ENCODE measurements at regions of chr17 and their contacts with region 1.

Region 1: GRCh38 chr17:43316522-43317142 is 82.2 kb upstream of the ARL4D start:
- DNase-seq: no peak
- ATAC-seq: no peak
- H3K4me3 ChIP-seq: no peak overlapping the region
- H3K27ac ChIP-seq: no peak overlapping the region
- H3K4me1 ChIP-seq: no peaks in the 10 kb centered on the region
- H3K27me3 ChIP-seq: no peaks in the 10 kb centered on the region
- CTCF ChIP-seq: no peak
- POLR2A ChIP-seq: no peak
- RAD21 ChIP-seq: no peak

Region 2: GRCh38 chr17:42997984-42998938 is 318.4 kb before region 1 on chr17 and contains the start of gene RPL27:
- CTCF ChIA-PET with region 1: interaction called, 3 read pairs
- POLR2A ChIA-PET with region 1: no interaction called
- dilution Hi-C with region 1: no loop called
- in situ Hi-C with region 1: no loop called
- intact Hi-C with region 1: loop called (anchors 10 kb)
- DNase-seq: peak; percentile 100
- ATAC-seq: peak; percentile 95
- H3K4me3 ChIP-seq: peak within 1 kb of the TSS; percentile 64
- H3K27ac ChIP-seq: peak within 1 kb of the TSS; percentile 86
- H3K4me1 ChIP-seq: peaks cover 6% of the 10 kb centered on the region
- H3K27me3 ChIP-seq: no peaks in the 10 kb centered on the region
- CTCF ChIP-seq: peak; percentile 88
- POLR2A ChIP-seq: peak; percentile 97
- RAD21 ChIP-seq: peak; percentile 67
- total RNA-seq, gene RPL27: 1,595 and 1,663 TPM in 2 replicates

Region 3: GRCh38 chr17:43170766-43171585 is 145.7 kb before region 1 on chr17 and contains the start of gene NBR1:
- CTCF ChIA-PET with region 1: no interaction called
- POLR2A ChIA-PET with region 1: interaction called, 11 read pairs
- dilution Hi-C with region 1: no loop called
- in situ Hi-C with region 1: no loop called
- intact Hi-C with region 1: no loop called
- DNase-seq: peak; percentile 98
- ATAC-seq: peak; percentile 83
- H3K4me3 ChIP-seq: peak within 1 kb of the TSS; percentile 75
- H3K27ac ChIP-seq: peak within 1 kb of the TSS; percentile 98
- H3K4me1 ChIP-seq: peaks cover 2% of the 10 kb centered on the region; the same call in 1 of the 2 replicates
- H3K27me3 ChIP-seq: no peaks in the 10 kb centered on the region
- CTCF ChIP-seq: 0 out of 2 replicates have a peak, but pooled peaks have one; percentile 24
- POLR2A ChIP-seq: peak; percentile 91
- RAD21 ChIP-seq: no peak
- total RNA-seq, gene NBR1: 105 and 132 TPM in 2 replicates

Region 4: DNA sequence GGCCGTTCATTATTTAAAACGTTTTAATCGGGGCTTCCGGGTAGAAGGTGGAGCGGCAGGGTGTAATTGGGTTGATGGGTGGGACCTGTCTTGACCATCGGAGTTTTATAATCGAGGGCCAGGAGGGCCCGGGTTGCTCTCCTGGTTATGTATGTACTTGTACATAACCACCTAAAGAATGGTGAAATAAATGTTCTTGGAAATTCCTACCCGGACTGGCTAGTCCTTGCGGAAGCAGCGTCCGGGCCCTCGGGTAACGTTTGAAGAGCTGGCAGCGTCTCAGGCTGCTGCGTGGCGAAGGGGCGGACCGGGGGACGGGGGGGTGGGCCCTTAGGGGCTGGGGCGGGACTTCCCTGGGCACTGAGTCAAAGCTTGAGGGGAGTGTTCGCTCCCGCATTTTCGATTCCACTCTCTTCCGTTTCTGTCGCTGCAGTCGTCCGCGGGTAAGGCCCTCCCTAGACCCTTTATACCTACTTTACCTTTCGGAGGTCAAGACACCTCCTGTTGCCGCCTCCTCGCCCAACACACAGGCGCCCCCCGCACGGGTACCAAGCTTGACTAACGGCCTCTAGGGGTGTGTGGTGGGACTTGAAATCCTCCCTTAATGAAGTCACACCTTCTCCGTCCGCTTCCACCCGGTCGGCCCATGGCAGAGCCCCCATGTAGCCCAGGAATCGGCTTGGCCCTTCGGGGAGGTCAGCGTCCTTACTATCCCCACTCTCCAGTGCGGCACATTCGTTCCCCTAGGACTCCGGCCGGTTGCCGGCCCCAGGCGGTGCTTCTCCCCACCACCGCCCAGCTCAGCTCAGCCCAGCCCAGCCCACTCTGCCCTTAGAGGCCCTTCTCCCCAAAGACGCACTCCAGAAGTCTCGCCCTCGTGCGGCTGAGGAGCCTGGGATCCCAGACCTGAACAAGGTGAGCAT is 104.9 kb before region 1 on chr17 and contains the start of gene TMEM106A:
- CTCF ChIA-PET with region 1: no interaction called
- POLR2A ChIA-PET with region 1: interaction called, 12 read pairs
- dilution Hi-C with region 1: no loop called
- in situ Hi-C with region 1: loop called (anchors 25 kb)
- intact Hi-C with region 1: loop called (anchors 1 kb)
- DNase-seq: peak; percentile 85
- ATAC-seq: peak; percentile 88
- H3K4me3 ChIP-seq: peak within 1 kb of the TSS; percentile 74
- H3K27ac ChIP-seq: peak within 1 kb of the TSS; percentile 84
- H3K4me1 ChIP-seq: peaks cover 16% of the 10 kb centered on the region
- H3K27me3 ChIP-seq: no peaks in the 10 kb centered on the region
- CTCF ChIP-seq: peak; percentile 30
- POLR2A ChIP-seq: peak; percentile 71
- RAD21 ChIP-seq: 0 out of 2 replicates have a peak, but pooled peaks have one; percentile 9
- total RNA-seq, gene TMEM106A: 1.4 and 2.2 TPM in 2 replicates

Region 5: GRCh38 chr17:43349142-43349541 is 32.5 kb after region 1 on chr17:
- CTCF ChIA-PET with region 1: no interaction called
- POLR2A ChIA-PET with region 1: interaction called, 10 read pairs
- dilution Hi-C with region 1: no loop called
- in situ Hi-C with region 1: no loop called
- intact Hi-C with region 1: no loop called
- DNase-seq: no peak
- ATAC-seq: no peak
- H3K4me3 ChIP-seq: no peak overlapping the region
- H3K27ac ChIP-seq: no peak overlapping the region
- H3K4me1 ChIP-seq: no peaks in the 10 kb centered on the region
- H3K27me3 ChIP-seq: no peaks in the 10 kb centered on the region
- CTCF ChIP-seq: no peak
- POLR2A ChIP-seq: no peak
- RAD21 ChIP-seq: no peak

Region 6: DNA sequence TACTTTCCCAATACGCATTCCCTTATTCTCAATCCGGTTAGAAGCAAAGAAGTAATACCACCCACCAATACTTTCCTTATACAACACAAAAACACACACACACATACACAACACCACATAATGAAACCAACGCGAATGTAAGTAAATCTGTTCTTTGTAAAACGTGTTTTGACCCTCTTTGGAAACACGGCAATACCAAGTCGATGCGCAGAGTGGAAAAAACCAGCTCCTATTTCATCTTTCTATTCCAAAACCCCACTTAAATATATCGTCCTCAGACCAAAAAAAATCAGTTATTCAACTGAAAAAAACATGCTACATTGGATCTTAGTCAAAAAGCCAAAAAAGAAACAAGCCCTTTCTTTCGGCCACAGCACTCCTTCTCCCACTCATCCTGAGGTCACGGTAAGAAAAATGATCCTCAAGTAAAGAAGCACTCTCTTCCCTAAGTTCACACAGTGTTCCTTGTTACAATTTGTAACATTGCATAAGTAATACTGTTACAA is 51.2 kb after region 1 on chr17:
- CTCF ChIA-PET with region 1: no interaction called
- POLR2A ChIA-PET with region 1: interaction called, 35 read pairs
- dilution Hi-C with region 1: no loop called
- in situ Hi-C with region 1: no loop called
- intact Hi-C with region 1: no loop called
- DNase-seq: peak; percentile 97
- ATAC-seq: peak; percentile 59
- H3K4me3 ChIP-seq: peak overlapping the region; percentile 35; the same call in 1 of the 2 replicates
- H3K27ac ChIP-seq: peak overlapping the region; percentile 79
- H3K4me1 ChIP-seq: peaks cover 14% of the 10 kb centered on the region
- H3K27me3 ChIP-seq: no peaks in the 10 kb centered on the region
- CTCF ChIP-seq: no peak
- POLR2A ChIP-seq: peak; percentile 100
- RAD21 ChIP-seq: no peak